ENCODE measurements at regions of chr7 and their contacts with region 1.

Region 1: GRCh38 chr7:31134246-31135188 is 82.4 kb downstream of the ADCYAP1R1 start:
- DNase-seq: peak; percentile 61 to 64
- H3K4me3 ChIP-seq: no peak overlapping the region
- H3K27ac ChIP-seq: no peak overlapping the region
- H3K4me1 ChIP-seq: no peaks in the 10 kb centered on the region
- H3K27me3 ChIP-seq: peaks cover 44% of the 10 kb centered on the region
- CTCF ChIP-seq: peak; percentile 93

Region 2: GRCh38 chr7:31373337-31374289 is 239.1 kb after region 1 on chr7:
- CTCF ChIA-PET with region 1: interaction called, 11 read pairs
- POLR2A ChIA-PET with region 1: no interaction called
- intact Hi-C with region 1: loop called (anchors 5 kb)
- DNase-seq: peak in 1 of 2 experiments; percentile 62
- H3K4me3 ChIP-seq: no peak overlapping the region
- H3K27ac ChIP-seq: no peak overlapping the region
- H3K4me1 ChIP-seq: no peaks in the 10 kb centered on the region
- H3K27me3 ChIP-seq: peaks cover 58% of the 10 kb centered on the region
- CTCF ChIP-seq: peak; percentile 92

Region 3: DNA sequence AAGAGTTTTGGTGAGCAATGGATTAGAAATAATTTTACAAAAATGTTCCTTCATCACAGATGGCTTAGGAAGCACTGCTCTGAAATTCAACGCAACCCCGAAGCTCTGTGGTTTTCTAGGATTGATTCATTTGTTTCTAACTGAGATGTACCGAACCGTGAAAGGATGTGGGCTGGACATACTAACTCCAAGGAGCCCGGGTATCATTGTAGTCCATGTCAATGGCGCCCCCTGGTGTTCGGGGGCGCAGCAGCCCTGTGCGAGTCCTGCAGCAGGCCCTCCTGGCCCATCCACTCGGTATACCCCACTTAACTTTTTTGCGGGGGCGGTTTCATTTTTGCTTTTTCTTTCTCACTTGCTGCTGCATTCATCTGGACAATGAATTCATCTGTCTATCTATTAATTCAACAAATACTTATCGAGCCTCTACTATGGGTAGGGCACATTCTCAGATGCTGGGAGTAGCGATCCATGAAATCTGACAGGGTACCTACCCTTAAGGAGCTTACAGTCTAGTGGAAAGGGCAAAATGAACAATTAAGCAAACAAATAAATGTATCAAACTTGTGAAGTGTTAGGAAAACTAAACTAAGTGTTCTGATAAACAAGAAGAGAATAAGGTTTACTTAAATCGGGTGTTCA is 354.2 kb after region 1 on chr7:
- CTCF ChIA-PET with region 1: no interaction called
- POLR2A ChIA-PET with region 1: no interaction called
- intact Hi-C with region 1: loop called (anchors 2 kb)
- DNase-seq: peak in 1 of 2 experiments; percentile 59
- H3K4me3 ChIP-seq: no peak overlapping the region
- H3K27ac ChIP-seq: no peak overlapping the region
- H3K4me1 ChIP-seq: no peaks in the 10 kb centered on the region
- H3K27me3 ChIP-seq: peaks cover 15% of the 10 kb centered on the region
- CTCF ChIP-seq: peak; percentile 91

Region 4: GRCh38 chr7:31735991-31736982 is 601.8 kb after region 1 on chr7:
- CTCF ChIA-PET with region 1: no interaction called
- POLR2A ChIA-PET with region 1: no interaction called
- intact Hi-C with region 1: loop called (anchors 1 kb)
- DNase-seq: peak; percentile 42 to 51
- H3K4me3 ChIP-seq: no peak overlapping the region
- H3K27ac ChIP-seq: no peak overlapping the region
- H3K4me1 ChIP-seq: no peaks in the 10 kb centered on the region
- H3K27me3 ChIP-seq: peaks cover 44% of the 10 kb centered on the region
- CTCF ChIP-seq: peak; percentile 95